ENCODE measurements at regions of chr6 and their contacts with region 1.

Region 1: DNA sequence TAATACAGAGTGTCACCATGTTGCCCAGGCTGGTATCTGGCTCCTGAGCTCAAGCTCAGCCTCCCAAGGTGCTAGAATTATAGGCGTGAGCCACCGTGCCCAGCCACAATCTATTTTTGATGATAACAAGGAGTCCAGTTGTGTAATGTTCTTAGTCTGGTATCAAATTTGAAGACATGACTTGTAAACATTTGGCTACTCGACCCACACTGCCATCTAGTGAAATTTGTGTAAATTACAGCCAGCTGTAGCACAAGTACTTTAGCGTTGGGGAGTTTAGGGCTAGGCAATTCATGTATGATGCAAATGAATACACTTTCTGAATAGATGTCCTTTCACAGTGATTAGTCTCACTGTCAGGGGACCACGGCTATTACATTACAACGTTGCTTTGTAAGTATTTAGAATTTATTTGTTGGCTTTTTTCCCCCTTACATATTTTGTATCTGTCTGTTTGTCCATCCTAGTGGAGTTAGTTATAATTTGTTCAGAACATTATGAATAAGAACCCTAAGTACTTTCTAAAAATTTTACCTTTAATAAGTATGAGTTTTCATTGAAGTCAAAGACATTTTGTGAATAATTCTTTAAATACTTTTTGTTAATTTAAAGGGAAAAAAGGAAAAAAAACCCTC is 139.7 kb downstream of the PRDM13 start:
- DNase-seq: peak; percentile 63

Region 2: GRCh38 chr6:99613409-99613704 is 133.0 kb before region 1 on chr6:
- in situ Hi-C with region 1: loop called (anchors 25 kb)
- DNase-seq: peak; percentile 13

Measured in ACHN (cell line).